WTC11 (cell line): ENCODE measurements at regions of chr17 and their contacts with region 1.

Region 1: GRCh38 chr17:43170140-43170765 is 761 bp upstream of the NBR1 start:
- DNase-seq: peak; percentile 87
- ATAC-seq: peak; percentile 80
- H3K4me3 Mint-ChIP-seq: no peak overlapping the region
- H3K27ac Mint-ChIP-seq: no peak overlapping the region
- H3K4me1 Mint-ChIP-seq: no peaks in the 10 kb centered on the region; the same call in none of the 2 replicates
- H3K27me3 Mint-ChIP-seq: no peaks in the 10 kb centered on the region
- CTCF ChIP-seq: no peak

Region 2: DNA sequence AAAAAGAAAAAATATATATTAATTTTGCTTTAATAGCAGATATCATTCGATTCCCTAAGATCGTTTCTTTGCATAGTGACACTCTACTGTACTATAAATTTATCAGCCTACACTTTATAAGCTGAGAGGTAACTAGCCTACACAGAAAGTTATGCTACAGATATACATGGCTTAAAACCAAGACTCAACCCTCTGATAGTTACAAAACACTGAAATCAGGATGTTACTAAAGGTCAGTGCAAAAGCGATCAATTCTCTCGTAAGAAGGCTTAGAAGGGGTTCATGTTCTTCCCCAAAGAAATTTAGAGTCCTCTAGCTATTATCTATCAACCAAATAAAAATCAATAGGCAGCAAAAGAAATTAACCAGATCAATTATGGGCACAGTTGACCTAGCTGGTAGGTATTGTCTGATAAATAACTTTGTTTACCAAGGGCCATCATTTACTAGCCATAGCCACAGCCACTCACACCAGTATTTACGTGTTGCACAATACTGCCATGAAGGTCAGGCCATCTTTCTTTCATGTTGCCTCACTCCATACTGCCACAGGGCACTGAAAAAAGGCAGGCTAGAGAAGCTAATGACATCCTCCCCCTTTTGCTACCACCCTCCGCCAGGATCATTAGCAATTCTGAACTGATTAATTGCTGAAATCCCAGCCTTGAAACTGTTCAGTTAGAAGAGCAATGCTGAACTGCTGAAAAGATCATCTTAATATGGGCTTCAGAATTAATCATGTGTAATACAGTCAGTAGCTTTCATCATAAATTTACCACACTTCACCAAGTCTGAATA is 101.5 kb before region 1 on chr17:
- CTCF ChIA-PET with region 1: no interaction called
- POLR2A ChIA-PET with region 1: no interaction called
- DNase-seq: no peak
- ATAC-seq: no peak
- H3K4me3 Mint-ChIP-seq: no peak overlapping the region
- H3K27ac Mint-ChIP-seq: peak overlapping the region; percentile 85
- H3K4me1 Mint-ChIP-seq: peaks cover 15% of the 10 kb centered on the region
- H3K27me3 Mint-ChIP-seq: no peaks in the 10 kb centered on the region
- CTCF ChIP-seq: no peak

Region 3: DNA sequence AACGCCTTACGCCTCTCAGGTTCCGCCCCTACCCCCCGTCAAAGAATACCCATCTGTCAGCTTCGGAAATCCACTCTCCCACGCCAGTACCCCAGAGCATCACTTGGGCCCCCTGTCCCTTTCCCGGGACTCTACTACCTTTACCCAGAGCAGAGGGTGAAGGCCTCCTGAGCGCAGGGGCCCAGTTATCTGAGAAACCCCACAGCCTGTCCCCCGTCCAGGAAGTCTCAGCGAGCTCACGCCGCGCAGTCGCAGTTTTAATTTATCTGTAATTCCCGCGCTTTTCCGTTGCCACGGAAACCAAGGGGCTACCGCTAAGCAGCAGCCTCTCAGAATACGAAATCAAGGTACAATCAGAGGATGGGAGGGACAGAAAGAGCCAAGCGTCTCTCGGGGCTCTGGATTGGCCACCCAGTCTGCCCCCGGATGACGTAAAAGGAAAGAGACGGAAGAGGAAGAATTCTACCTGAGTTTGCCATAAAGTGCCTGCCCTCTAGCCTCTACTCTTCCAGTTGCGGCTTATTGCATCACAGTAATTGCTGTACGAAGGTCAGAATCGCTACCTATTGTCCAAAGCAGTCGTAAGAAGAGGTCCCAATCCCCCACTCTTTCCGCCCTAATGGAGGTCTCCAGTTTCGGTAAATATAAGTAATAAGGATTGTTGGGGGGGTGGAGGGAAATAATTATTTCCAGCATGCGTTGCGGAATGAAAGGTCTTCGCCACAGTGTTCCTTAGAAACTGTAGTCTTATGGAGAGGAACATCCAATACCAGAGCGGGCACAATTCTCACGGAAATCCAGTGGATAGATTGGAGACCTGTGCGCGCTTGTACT is 44.9 kb before region 1 on chr17 and contains the start of gene BRCA1:
- CTCF ChIA-PET with region 1: no interaction called
- POLR2A ChIA-PET with region 1: interaction called, 10 read pairs
- DNase-seq: peak; percentile 93
- ATAC-seq: peak; percentile 98
- H3K4me3 Mint-ChIP-seq: peak within 1 kb of the TSS; percentile 98
- H3K27ac Mint-ChIP-seq: peak within 1 kb of the TSS; percentile 99
- H3K4me1 Mint-ChIP-seq: peaks cover 9% of the 10 kb centered on the region
- H3K27me3 Mint-ChIP-seq: no peaks in the 10 kb centered on the region
- CTCF ChIP-seq: no peak
- total RNA-seq, gene BRCA1: 37.8 to 38.4 TPM (median 38.1 TPM) in 3 replicates